AG04450 (cell line): ENCODE measurements at regions of chr13 and their contacts with region 1.

Region 1: GRCh38 chr13:39144941-39145533 is 106.8 kb downstream of the NHLRC3 start:
- DNase-seq: peak; percentile 26
- H3K4me3 ChIP-seq: no peak overlapping the region
- H3K27ac ChIP-seq: no peak overlapping the region
- H3K27me3 ChIP-seq: no peaks in the 10 kb centered on the region
- CTCF ChIP-seq: peak; percentile 88

Region 2: GRCh38 chr13:39051157-39051556 is 93.9 kb before region 1 on chr13:
- CTCF ChIA-PET with region 1: interaction called, 10 read pairs
- POLR2A ChIA-PET with region 1: no interaction called
- DNase-seq: no peak
- H3K4me3 ChIP-seq: no peak overlapping the region
- H3K27ac ChIP-seq: no peak overlapping the region
- H3K27me3 ChIP-seq: no peaks in the 10 kb centered on the region
- CTCF ChIP-seq: peak; percentile 53

Region 3: GRCh38 chr13:39132286-39133230 is 12.5 kb before region 1 on chr13:
- CTCF ChIA-PET with region 1: interaction called, 11 read pairs
- POLR2A ChIA-PET with region 1: no interaction called
- DNase-seq: no peak
- H3K4me3 ChIP-seq: no peak overlapping the region
- H3K27ac ChIP-seq: no peak overlapping the region
- H3K27me3 ChIP-seq: no peaks in the 10 kb centered on the region
- CTCF ChIP-seq: no peak

Region 4: GRCh38 chr13:39263033-39263432 is 118.0 kb after region 1 on chr13:
- CTCF ChIA-PET with region 1: interaction called, 11 read pairs
- POLR2A ChIA-PET with region 1: no interaction called
- DNase-seq: no peak
- H3K4me3 ChIP-seq: no peak overlapping the region
- H3K27ac ChIP-seq: no peak overlapping the region
- H3K27me3 ChIP-seq: no peaks in the 10 kb centered on the region
- CTCF ChIP-seq: peak; percentile 70